ENCODE measurements at regions of chr14 and their contacts with region 1.

Region 1: DNA sequence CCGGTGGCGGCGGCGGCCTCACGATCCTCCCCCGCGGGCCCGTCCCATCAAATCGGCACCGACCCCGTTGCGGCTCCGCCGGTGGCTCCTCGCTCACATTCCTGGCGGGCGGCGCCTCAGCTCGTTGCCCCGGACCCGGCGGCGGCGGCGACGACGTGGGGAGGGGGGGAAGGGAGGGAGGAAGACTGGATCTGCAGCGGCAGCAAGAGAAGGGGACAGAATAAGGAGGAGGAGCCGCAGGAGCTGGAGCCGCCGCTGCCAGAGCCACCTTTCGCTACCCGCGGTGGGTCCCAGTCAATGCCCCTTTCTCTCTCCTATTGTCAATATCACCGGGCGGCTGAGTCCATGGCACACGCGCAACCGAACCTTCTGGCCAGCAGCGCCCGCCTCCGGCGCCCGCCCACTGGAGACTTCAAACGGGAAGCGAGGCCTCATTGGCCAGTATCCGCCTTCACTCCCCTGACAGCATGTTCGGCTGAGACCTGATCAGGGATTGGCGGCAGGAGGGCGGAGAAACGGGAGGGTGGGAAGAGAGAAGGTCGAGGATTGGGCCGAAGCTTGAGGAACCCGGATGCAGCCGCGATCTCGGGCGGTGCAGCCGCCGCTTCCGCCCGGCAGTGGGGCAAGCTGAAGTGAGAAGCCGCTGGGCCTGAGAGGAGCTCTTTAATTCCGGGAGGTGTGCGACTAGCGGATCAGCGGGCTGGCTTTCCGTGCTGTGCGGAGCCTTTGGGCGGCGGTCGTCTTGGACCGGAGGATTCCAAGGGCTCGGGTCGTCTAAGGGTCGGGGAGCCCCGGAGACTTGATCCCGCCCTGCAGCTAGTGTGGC is at the start of gene PPP2R5E:
- DNase-seq: peak; percentile 98 to 99 (median 99)
- H3K4me3 ChIP-seq: peak within 1 kb of the TSS; percentile 63 to 100 (median 86)
- H3K27ac ChIP-seq: peak within 1 kb of the TSS; percentile 51 to 89 (median 84)
- H3K4me1 ChIP-seq: peaks cover 7 to 27% of the 10 kb centered on the region in 2 donors
- H3K27me3 ChIP-seq: no peaks in the 10 kb centered on the region
- CTCF ChIP-seq: peak in 2 of 6 experiments; percentile 4 to 15
- POLR2A ChIP-seq: peak; percentile 60 to 82
- total RNA-seq, gene PPP2R5E: 13.4 to 46.5 (median 24.7) TPM

Region 2: DNA sequence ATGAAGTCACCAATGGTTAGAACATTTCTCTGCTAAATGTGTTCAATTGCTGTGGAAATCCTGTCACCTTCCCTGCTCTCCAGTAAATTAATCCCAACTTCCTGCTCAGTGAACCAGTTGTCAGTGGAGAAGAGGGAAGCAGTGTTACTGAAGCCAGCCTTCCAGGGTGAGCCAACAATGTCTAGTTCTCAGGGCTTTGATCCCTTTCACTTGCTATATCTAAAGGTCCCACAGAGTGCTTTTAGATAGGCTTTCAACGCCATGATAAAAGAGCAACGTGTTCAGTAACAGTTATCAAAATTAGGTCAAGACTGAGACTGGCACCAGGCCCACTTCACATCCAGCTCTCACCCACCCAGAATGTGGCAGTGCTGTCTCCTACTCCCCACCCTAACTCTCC is 637.6 kb before region 1 on chr14:
- intact Hi-C with region 1: no loop called
- DNase-seq: no peak
- H3K4me3 ChIP-seq: no peak overlapping the region
- H3K27ac ChIP-seq: no peak overlapping the region
- H3K4me1 ChIP-seq: no peaks in the 10 kb centered on the region
- H3K27me3 ChIP-seq: no peaks in the 10 kb centered on the region
- CTCF ChIP-seq: no peak
- POLR2A ChIP-seq: no peak

Region 3: DNA sequence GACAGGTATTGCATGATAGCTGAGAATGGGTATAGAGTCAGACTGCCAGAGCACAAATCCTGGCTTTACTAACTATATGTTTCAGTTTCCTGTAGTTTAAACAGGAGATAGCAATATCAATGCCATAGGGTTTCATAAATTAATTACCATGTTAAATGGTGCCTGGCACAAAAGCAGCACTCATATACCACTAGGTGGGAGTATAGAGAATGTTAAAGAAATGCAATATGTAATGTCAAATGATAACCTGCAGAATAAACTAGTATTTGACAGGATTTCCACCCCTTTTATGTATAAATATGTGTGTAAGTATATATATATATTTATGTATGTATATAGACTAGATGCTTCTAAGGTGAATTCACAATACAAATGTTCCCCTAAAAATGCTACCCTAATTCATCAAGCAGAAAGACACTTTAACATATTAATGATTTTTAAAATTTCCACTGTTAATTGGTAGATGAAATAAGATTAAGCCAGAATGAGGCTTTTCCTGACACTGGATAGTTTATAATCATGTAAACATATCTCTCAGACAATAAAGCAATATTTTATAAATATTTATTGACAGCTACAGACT is 89.8 kb after region 1 on chr14:
- intact Hi-C with region 1: loop called in 1 of 2 experiments (anchors 10 kb)
- DNase-seq: no peak
- H3K4me3 ChIP-seq: no peak overlapping the region
- H3K27ac ChIP-seq: no peak overlapping the region
- H3K4me1 ChIP-seq: no peaks in the 10 kb centered on the region
- H3K27me3 ChIP-seq: no peaks in the 10 kb centered on the region
- CTCF ChIP-seq: peak; percentile 14 to 46 (median 38)
- POLR2A ChIP-seq: no peak

Measured in adrenal gland (tissue), 19 donors.